Endothelial cell of umbilical vein (primary cell): ENCODE measurements at regions of chr4 and their contacts with region 1.

Region 1: GRCh38 chr4:38069271-38069760 is 109.1 kb downstream of the PTTG2 start:
- DNase-seq: peak; percentile 38
- H3K4me3 ChIP-seq: no peak overlapping the region
- H3K27ac ChIP-seq: no peak overlapping the region
- H3K4me1 ChIP-seq: peaks cover 10% of the 10 kb centered on the region
- H3K27me3 ChIP-seq: no peaks in the 10 kb centered on the region
- CTCF ChIP-seq: no peak
- POLR2A ChIP-seq: no peak

Region 2: GRCh38 chr4:38119668-38120385 is 50.5 kb after region 1 on chr4:
- CTCF ChIA-PET with region 1: interaction called, 15 read pairs
- POLR2A ChIA-PET with region 1: no interaction called
- dilution Hi-C with region 1: no loop called
- intact Hi-C with region 1: no loop called
- DNase-seq: peak; percentile 7
- H3K4me3 ChIP-seq: no peak overlapping the region
- H3K27ac ChIP-seq: no peak overlapping the region
- H3K4me1 ChIP-seq: no peaks in the 10 kb centered on the region
- H3K27me3 ChIP-seq: no peaks in the 10 kb centered on the region
- CTCF ChIP-seq: no peak
- POLR2A ChIP-seq: no peak

Region 3: GRCh38 chr4:38174801-38175200 is 105.5 kb after region 1 on chr4:
- CTCF ChIA-PET with region 1: interaction called, 66 read pairs
- POLR2A ChIA-PET with region 1: no interaction called
- dilution Hi-C with region 1: no loop called
- intact Hi-C with region 1: no loop called
- DNase-seq: peak; percentile 16
- H3K4me3 ChIP-seq: no peak overlapping the region
- H3K27ac ChIP-seq: no peak overlapping the region
- H3K4me1 ChIP-seq: peaks cover 18% of the 10 kb centered on the region
- H3K27me3 ChIP-seq: peaks cover 2 to 7% of the 10 kb centered on the region in 2 experiments
- CTCF ChIP-seq: no peak
- POLR2A ChIP-seq: no peak